ENCODE measurements at regions of chr11 and their contacts with region 1.

Region 1: DNA sequence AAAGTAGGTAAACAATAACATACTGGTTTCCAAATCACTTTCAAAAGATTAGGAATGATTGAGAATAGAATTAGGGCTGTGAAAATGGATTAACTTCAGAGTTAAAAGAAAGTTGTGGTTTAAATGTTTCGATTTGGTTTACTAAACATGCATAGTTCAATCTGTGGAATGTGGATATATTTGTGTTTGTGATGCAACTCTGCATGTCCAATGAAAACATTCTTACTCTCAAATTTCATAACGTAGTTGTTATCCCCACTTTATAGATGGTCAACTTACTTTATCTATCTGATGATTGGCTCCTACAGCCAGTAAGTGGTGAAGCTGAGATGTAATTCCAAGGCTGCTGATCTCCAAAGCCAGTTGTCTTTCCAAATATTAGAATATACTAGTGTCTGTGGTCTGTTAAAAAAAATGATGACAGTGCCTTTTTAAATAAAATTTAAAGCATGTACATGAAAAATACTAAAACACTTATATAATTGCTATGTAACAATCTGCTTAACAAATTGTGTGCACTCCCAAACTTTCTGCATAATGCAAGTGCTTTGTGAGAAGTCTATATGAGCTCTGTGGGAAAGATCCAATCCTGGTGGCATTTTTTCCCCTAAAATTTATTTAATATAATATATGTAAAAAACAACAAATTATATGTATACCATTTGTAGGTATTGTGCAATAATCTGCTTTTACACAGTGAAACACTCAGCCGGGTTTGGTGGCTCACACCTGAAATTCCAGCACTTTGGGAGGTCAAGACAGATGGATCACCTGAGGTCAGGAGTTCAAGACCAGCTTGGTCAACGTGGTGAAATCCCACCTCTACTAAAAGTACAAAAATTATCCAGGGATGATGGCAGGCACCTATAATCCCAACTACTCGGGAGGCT is 9.7 kb upstream of the SIK3 start:
- DNase-seq: no peak
- H3K4me3 ChIP-seq: no peak overlapping the region
- H3K27ac ChIP-seq: no peak overlapping the region
- H3K4me1 ChIP-seq: no peaks in the 10 kb centered on the region
- H3K27me3 ChIP-seq: no peaks in the 10 kb centered on the region
- CTCF ChIP-seq: no peak
- EP300 ChIP-seq: no peak
- POLR2A ChIP-seq: no peak
- RAD21 ChIP-seq: no peak

Region 2: GRCh38 chr11:116787786-116788486 is 320.0 kb before region 1 on chr11 and contains the start of gene ZPR1:
- CTCF ChIA-PET with region 1: interaction called, 19 read pairs
- POLR2A ChIA-PET with region 1: interaction called, 3 read pairs
- DNase-seq: peak in 1 of 2 experiments; percentile 89
- H3K4me3 ChIP-seq: peak within 1 kb of the TSS; percentile 79 to 93 (median 85)
- H3K27ac ChIP-seq: peak within 1 kb of the TSS; percentile 56; the same call in 1 of the 2 replicates
- H3K4me1 ChIP-seq: peaks cover 4 to 9% (median 6%) of the 10 kb centered on the region in 4 experiments
- H3K27me3 ChIP-seq: peaks cover 0 to 11% (median 3%) of the 10 kb centered on the region in 4 experiments; a peak in 4 of 7 replicates
- CTCF ChIP-seq: no peak; a peak in 1 of 4 replicates
- EP300 ChIP-seq: no peak
- POLR2A ChIP-seq: peak in 1 of 2 experiments; percentile 84; a peak in 2 of 3 replicates
- RAD21 ChIP-seq: no peak
- total RNA-seq, gene ZPR1: 70.5 and 81.2 TPM in 2 replicates

Region 3: GRCh38 chr11:116853461-116854073 is 254.4 kb before region 1 on chr11:
- CTCF ChIA-PET with region 1: interaction called, 10 read pairs
- POLR2A ChIA-PET with region 1: no interaction called
- DNase-seq: no peak
- H3K4me3 ChIP-seq: no peak overlapping the region
- H3K27ac ChIP-seq: no peak overlapping the region
- H3K4me1 ChIP-seq: no peaks in the 10 kb centered on the region
- H3K27me3 ChIP-seq: no peaks in the 10 kb centered on the region
- CTCF ChIP-seq: no peak
- EP300 ChIP-seq: no peak
- POLR2A ChIP-seq: no peak
- RAD21 ChIP-seq: no peak

Region 4: DNA sequence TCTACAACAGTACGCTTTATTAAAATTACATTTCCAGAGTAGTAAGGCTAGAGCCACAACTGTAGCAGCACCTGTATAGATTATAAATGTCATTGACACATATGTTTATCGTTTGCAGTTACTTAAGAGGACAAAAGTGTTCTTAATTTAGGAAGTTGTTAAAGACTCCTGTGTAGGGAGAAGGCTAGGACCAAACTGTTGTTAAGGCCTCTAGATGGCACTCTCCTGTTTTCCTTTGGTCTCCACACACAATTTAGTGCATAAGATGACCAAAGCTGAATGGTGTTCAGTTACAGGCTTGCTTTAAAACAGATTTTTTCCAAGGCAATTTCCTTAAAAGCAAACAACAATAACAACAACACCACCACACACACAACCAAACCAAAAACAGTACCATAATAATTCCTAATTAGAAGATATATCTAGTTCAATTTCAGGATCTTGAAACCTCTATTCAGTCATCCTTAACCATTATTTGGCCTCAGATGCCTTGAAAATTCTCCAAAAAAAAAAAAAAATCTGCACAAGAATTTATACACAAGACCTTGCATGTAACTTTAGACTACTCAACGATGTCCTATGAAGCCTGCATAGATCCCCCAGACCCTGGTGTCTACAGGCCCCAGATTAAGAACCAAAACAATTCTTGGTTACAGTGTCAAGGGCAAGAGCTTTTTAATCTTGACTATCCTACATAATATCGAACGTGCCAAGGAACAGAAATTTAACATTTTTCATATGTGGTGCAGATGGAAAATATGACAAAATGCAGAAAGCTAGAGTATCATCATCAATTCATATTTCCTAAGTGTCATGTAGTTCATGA is 227.9 kb before region 1 on chr11:
- CTCF ChIA-PET with region 1: interaction called, 65 read pairs
- POLR2A ChIA-PET with region 1: no interaction called
- DNase-seq: no peak
- H3K4me3 ChIP-seq: no peak overlapping the region
- H3K27ac ChIP-seq: no peak overlapping the region
- H3K4me1 ChIP-seq: no peaks in the 10 kb centered on the region
- H3K27me3 ChIP-seq: no peaks in the 10 kb centered on the region
- CTCF ChIP-seq: peak in 2 of 3 experiments; percentile 63 to 78; a peak in 3 of 4 replicates
- EP300 ChIP-seq: no peak
- POLR2A ChIP-seq: no peak
- RAD21 ChIP-seq: peak; percentile 74 to 76

Region 5: GRCh38 chr11:116895048-116895757 is 212.7 kb before region 1 on chr11:
- CTCF ChIA-PET with region 1: interaction called, 15 read pairs
- POLR2A ChIA-PET with region 1: no interaction called
- DNase-seq: peak; percentile 38 to 70
- H3K4me3 ChIP-seq: no peak overlapping the region
- H3K27ac ChIP-seq: no peak overlapping the region
- H3K4me1 ChIP-seq: no peaks in the 10 kb centered on the region
- H3K27me3 ChIP-seq: no peaks in the 10 kb centered on the region
- CTCF ChIP-seq: peak; percentile 63 to 95 (median 91)
- EP300 ChIP-seq: no peak
- POLR2A ChIP-seq: no peak
- RAD21 ChIP-seq: peak; percentile 79

Region 6: GRCh38 chr11:116958246-116958645 is 149.7 kb before region 1 on chr11:
- CTCF ChIA-PET with region 1: interaction called, 13 read pairs
- POLR2A ChIA-PET with region 1: no interaction called
- DNase-seq: no peak
- H3K4me3 ChIP-seq: no peak overlapping the region
- H3K27ac ChIP-seq: no peak overlapping the region
- H3K4me1 ChIP-seq: peaks cover 0 to 7% (median 3%) of the 10 kb centered on the region in 4 experiments; a peak in 6 of 7 replicates
- H3K27me3 ChIP-seq: no peaks in the 10 kb centered on the region
- CTCF ChIP-seq: no peak
- EP300 ChIP-seq: no peak
- POLR2A ChIP-seq: no peak
- RAD21 ChIP-seq: no peak

Region 7: DNA sequence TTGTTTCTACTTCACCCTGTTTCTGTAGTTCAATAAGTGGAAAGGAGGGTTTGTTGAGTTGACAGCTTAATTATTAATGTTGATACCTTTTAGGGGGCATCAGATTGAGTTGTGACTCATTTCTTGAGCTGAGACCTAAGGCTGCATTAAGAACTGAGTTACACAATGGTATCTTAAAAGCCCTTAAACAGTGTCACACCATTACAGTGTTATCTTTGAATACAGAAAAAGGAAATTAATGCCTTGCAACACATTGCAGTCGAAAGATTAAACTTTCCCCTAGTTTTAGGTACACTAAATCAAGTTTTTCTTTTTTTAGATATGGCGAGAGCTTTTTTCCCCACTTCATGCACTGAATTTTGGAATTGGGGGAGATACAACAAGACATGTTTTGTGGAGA is 52.9 kb after region 1 on chr11:
- CTCF ChIA-PET with region 1: no interaction called
- POLR2A ChIA-PET with region 1: no interaction called
- DNase-seq: no peak
- H3K4me3 ChIP-seq: no peak overlapping the region
- H3K27ac ChIP-seq: no peak overlapping the region
- H3K4me1 ChIP-seq: no peaks in the 10 kb centered on the region
- H3K27me3 ChIP-seq: no peaks in the 10 kb centered on the region
- CTCF ChIP-seq: no peak
- EP300 ChIP-seq: no peak
- POLR2A ChIP-seq: no peak
- RAD21 ChIP-seq: no peak